GM13977 (cell line): ENCODE measurements at regions of chr11 and their contacts with region 1.

Region 1: DNA sequence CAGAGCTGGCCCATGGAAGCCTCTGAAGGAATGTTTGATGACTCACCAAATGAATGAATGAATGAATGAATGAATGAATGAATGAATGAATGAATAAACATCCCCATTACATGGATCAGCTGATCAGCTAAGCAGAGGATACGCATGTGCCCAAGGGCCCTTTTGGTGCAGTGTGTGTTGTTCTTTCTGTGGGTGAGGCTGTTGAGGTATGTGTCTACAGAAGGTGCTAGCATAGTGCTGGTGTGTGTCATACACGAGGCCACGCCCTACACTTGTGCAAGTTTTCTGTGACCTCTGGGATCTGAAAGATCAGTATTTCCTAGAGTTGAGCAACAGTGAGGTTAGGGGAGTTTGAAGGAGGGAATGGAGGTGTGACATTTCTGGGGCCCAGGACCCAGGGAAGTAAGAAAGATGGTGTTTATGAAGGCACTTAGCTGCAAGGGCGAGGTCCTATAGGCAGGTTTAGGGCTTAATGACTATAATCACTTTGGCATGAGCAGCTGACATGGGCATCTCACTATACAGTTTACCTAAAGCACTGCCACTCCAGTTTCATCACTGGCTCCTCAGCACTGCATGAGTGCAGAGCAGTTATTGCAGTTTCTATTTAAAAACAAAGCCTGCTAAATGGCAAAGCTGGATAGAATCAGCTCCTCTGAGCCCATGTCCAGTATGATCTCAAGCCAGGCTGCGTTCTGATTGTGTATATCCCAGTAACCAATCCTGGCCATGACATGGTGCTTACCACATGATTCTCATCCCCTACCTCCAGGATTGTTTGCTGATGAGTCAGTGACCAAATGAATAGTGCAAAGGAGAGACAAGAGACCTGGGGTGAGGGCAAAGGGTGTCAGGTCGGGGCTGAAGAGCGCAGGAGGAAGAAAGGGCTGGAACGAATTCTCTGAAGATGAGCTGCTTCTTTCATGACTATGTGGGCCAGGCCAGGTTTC is 36.4 kb upstream of the E2F8 start:
- DNase-seq: no peak
- CTCF ChIP-seq: no peak

Region 2: GRCh38 chr11:19903620-19904069 is 626.5 kb after region 1 on chr11:
- in situ Hi-C with region 1: loop called (anchors 25 kb)
- DNase-seq: peak; percentile 38
- CTCF ChIP-seq: peak; percentile 83